ENCODE measurements at regions of chr20 and their contacts with region 1.

Region 1: DNA sequence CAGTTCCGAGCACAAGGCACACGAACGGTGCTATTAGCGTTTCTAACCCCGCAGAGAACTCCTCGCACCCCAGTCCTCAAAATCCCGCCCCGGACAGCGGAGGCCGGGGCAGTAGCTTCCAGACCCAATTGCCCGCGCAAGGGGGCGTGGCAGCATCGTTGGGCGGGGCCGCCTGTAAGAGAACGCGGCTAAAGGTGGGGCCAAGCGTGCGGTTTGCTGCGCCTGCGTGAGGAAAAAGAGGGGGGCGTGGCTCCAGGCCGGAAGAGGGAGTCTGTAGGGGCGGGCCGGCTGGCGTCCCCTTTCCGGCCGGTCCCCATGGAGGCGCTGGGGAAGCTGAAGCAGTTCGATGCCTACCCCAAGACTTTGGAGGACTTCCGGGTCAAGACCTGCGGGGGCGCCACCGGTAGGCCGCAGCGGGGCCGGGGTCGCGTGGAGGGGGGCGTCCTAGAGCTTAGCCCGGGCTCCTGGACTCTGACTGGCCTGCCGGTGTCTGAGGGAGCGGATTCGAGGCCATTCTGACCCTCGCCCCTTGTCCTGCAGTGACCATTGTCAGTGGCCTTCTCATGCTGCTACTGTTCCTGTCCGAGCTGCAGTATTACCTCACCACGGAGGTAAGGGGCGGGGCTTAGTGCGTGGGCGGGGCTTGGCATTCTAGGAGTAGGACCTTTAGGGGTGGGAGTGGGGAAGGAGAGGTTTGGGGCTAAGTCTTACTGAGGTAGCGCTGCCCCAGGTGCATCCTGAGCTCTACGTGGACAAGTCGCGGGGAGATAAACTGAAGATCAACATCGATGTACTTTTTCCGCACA is at the start of gene ERGIC3:
- DNase-seq: peak; percentile 94 to 98 (median 95)
- ATAC-seq: peak; percentile 100
- H3K4me3 ChIP-seq: peak within 1 kb of the TSS; percentile 82
- H3K4me3 Mint-ChIP-seq: peak within 1 kb of the TSS; percentile 88 to 92 (median 91)
- H3K27ac ChIP-seq: peak within 1 kb of the TSS; percentile 77
- H3K27ac Mint-ChIP-seq: peak within 1 kb of the TSS; percentile 82 to 96 (median 91)
- H3K4me1 ChIP-seq: peaks cover 11 to 12% of the 10 kb centered on the region in 2 donors
- H3K4me1 Mint-ChIP-seq: peaks cover 9 to 32% (median 23%) of the 10 kb centered on the region in 7 donors
- H3K27me3 ChIP-seq: no peaks in the 10 kb centered on the region
- H3K27me3 Mint-ChIP-seq: no peaks in the 10 kb centered on the region
- total RNA-seq, gene ERGIC3: 139 to 158 (median 148) TPM

Region 2: GRCh38 chr20:34302723-34303528 is 1239.1 kb before region 1 on chr20 and contains the start of gene AHCY:
- CTCF ChIA-PET with region 1: no interaction called
- POLR2A ChIA-PET with region 1: no interaction called
- intact Hi-C with region 1: loop called in 1 of 2 experiments (anchors 5 kb)
- DNase-seq: peak; percentile 84 to 95 (median 92)
- ATAC-seq: peak; percentile 96
- H3K4me3 ChIP-seq: peak within 1 kb of the TSS; percentile 91
- H3K4me3 Mint-ChIP-seq: peak within 1 kb of the TSS; percentile 90 to 96 (median 91)
- H3K27ac ChIP-seq: peak within 1 kb of the TSS; percentile 87
- H3K27ac Mint-ChIP-seq: peak within 1 kb of the TSS; percentile 89 to 95 (median 93)
- H3K4me1 ChIP-seq: peaks cover 3 to 6% of the 10 kb centered on the region in 2 donors
- H3K4me1 Mint-ChIP-seq: peaks cover 0 to 27% (median 14%) of the 10 kb centered on the region in 7 donors
- H3K27me3 ChIP-seq: no peaks in the 10 kb centered on the region
- H3K27me3 Mint-ChIP-seq: peaks cover 0 to 2% (median 0%) of the 10 kb centered on the region in 5 donors
- total RNA-seq, gene AHCY: 19.1 to 62.9 (median 23.7) TPM

Region 3: GRCh38 chr20:35277531-35278395 is 264.2 kb before region 1 on chr20 and contains the start of gene MMP24OS:
- CTCF ChIA-PET with region 1: no interaction called
- POLR2A ChIA-PET with region 1: no interaction called
- intact Hi-C with region 1: loop called in 1 of 2 experiments (anchors 1 kb)
- DNase-seq: peak; percentile 77 to 90 (median 87)
- ATAC-seq: peak; percentile 95
- H3K4me3 ChIP-seq: peak within 1 kb of the TSS; percentile 99
- H3K4me3 Mint-ChIP-seq: peak within 1 kb of the TSS; percentile 84 to 97 (median 96)
- H3K27ac ChIP-seq: peak within 1 kb of the TSS; percentile 96
- H3K27ac Mint-ChIP-seq: peak within 1 kb of the TSS; percentile 95 to 99 (median 98)
- H3K4me1 ChIP-seq: peaks cover 11 to 18% of the 10 kb centered on the region in 2 donors
- H3K4me1 Mint-ChIP-seq: peaks cover 9 to 46% (median 28%) of the 10 kb centered on the region in 7 donors
- H3K27me3 ChIP-seq: no peaks in the 10 kb centered on the region
- H3K27me3 Mint-ChIP-seq: no peaks in the 10 kb centered on the region
- total RNA-seq, gene MMP24OS: 43.8 to 88.6 (median 69.4) TPM

Region 4: GRCh38 chr20:35454881-35455609 is 86.9 kb before region 1 on chr20 and contains the start of gene CEP250:
- CTCF ChIA-PET with region 1: no interaction called
- POLR2A ChIA-PET with region 1: interaction called, 4 read pairs
- intact Hi-C with region 1: loop called in 1 of 2 experiments (anchors 1 kb)
- DNase-seq: peak; percentile 89 to 97 (median 96)
- ATAC-seq: peak; percentile 99
- H3K4me3 ChIP-seq: peak within 1 kb of the TSS; percentile 94
- H3K4me3 Mint-ChIP-seq: peak within 1 kb of the TSS; percentile 82 to 98 (median 93)
- H3K27ac ChIP-seq: peak within 1 kb of the TSS; percentile 94
- H3K27ac Mint-ChIP-seq: peak within 1 kb of the TSS; percentile 86 to 99 (median 98)
- H3K4me1 ChIP-seq: no peaks in the 10 kb centered on the region
- H3K4me1 Mint-ChIP-seq: peaks cover 0 to 38% (median 23%) of the 10 kb centered on the region in 7 donors
- H3K27me3 ChIP-seq: no peaks in the 10 kb centered on the region
- H3K27me3 Mint-ChIP-seq: no peaks in the 10 kb centered on the region
- total RNA-seq, gene CEP250: 34.5 to 75.0 (median 70.7) TPM

Region 5: GRCh38 chr20:35523298-35523888 is 18.6 kb before region 1 on chr20:
- CTCF ChIA-PET with region 1: no interaction called
- POLR2A ChIA-PET with region 1: no interaction called
- intact Hi-C with region 1: no loop called
- DNase-seq: peak in 2 of 9 donors; percentile 10 to 23
- ATAC-seq: peak; percentile 65
- H3K4me3 ChIP-seq: no peak overlapping the region
- H3K4me3 Mint-ChIP-seq: no peak overlapping the region
- H3K27ac ChIP-seq: no peak overlapping the region
- H3K27ac Mint-ChIP-seq: peak overlapping the region in 1 of 9 donors; percentile 12
- H3K4me1 ChIP-seq: no peaks in the 10 kb centered on the region
- H3K4me1 Mint-ChIP-seq: peaks cover 0 to 2% (median 0%) of the 10 kb centered on the region in 7 donors
- H3K27me3 ChIP-seq: no peaks in the 10 kb centered on the region
- H3K27me3 Mint-ChIP-seq: no peaks in the 10 kb centered on the region

Region 6: GRCh38 chr20:35601008-35601973 is 59.3 kb after region 1 on chr20:
- CTCF ChIA-PET with region 1: interaction called, 4 read pairs
- POLR2A ChIA-PET with region 1: no interaction called
- intact Hi-C with region 1: loop called in 1 of 2 experiments (anchors 1 kb)
- DNase-seq: peak; percentile 66 to 82 (median 77)
- ATAC-seq: peak; percentile 95
- H3K4me3 ChIP-seq: peak overlapping the region; percentile 72
- H3K4me3 Mint-ChIP-seq: peak overlapping the region; percentile 72 to 84 (median 80)
- H3K27ac ChIP-seq: peak overlapping the region; percentile 36
- H3K27ac Mint-ChIP-seq: peak overlapping the region in 1 of 9 donors; percentile 10
- H3K4me1 ChIP-seq: peaks cover 5 to 6% of the 10 kb centered on the region in 2 donors
- H3K4me1 Mint-ChIP-seq: peaks cover 0 to 11% (median 6%) of the 10 kb centered on the region in 7 donors
- H3K27me3 ChIP-seq: peaks cover 0 to 5% of the 10 kb centered on the region in 2 donors
- H3K27me3 Mint-ChIP-seq: peaks cover 0 to 65% (median 5%) of the 10 kb centered on the region in 5 donors

Region 7: DNA sequence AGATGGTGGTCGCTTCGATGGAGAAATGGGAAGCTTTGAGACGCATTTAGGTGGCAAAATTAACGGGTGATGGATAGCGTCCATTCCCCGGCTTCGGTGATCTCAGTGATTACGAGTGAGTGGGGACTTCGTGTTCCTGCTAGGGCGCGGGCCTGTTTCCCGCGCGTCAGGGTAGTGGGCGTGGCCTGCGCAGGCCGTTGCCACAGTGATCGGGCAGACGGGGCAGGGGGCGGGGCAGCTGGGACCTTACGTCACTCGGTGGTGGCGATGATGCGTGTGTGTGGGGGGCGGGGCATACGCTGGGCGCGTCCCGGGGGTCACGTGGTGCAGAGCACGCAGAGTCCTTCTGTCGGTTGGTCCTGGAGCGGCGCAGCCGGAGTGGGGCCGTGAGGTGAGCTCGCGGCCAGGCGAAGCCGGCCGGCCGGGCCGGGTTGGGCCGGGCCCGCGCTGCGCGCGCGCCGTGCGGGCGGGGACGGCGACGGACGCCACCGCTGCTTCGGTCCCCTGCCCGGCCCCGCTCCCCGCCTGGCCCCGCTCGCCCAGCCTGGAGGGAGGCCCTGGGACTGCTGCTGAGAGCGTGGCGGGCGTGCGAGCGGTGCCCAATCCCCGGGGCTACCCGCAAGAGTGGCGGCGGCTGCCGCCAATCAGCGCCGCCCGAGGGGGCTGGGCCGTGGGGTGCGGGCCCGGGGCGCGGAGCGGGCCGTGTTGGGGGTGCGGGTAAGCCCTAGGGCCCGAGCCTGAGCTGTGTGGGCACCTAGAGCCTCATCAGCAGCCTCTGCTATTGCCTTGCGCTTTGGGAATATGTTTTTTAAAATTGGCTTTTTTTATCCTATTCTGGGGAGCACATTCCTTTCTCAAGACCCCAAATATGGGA is 229.9 kb after region 1 on chr20 and contains the start of gene PHF20:
- CTCF ChIA-PET with region 1: no interaction called
- POLR2A ChIA-PET with region 1: no interaction called
- intact Hi-C with region 1: loop called (anchors 2 to 5 kb)
- DNase-seq: peak; percentile 98 to 100 (median 99)
- ATAC-seq: peak; percentile 90
- H3K4me3 ChIP-seq: peak within 1 kb of the TSS; percentile 59
- H3K4me3 Mint-ChIP-seq: peak within 1 kb of the TSS; percentile 84 to 97 (median 94)
- H3K27ac ChIP-seq: peak within 1 kb of the TSS; percentile 98
- H3K27ac Mint-ChIP-seq: peak within 1 kb of the TSS; percentile 96 to 100 (median 100)
- H3K4me1 ChIP-seq: peaks cover 76 to 78% of the 10 kb centered on the region in 2 donors
- H3K4me1 Mint-ChIP-seq: peaks cover 52 to 88% (median 74%) of the 10 kb centered on the region in 7 donors
- H3K27me3 ChIP-seq: no peaks in the 10 kb centered on the region
- H3K27me3 Mint-ChIP-seq: no peaks in the 10 kb centered on the region
- total RNA-seq, gene PHF20: 57.5 to 157 (median 78.0) TPM

Measured in naive thymus-derived CD4-positive, alpha-beta T cell (primary cell).